Dorsolateral prefrontal cortex (tissue), 120 donors: ENCODE measurements at regions of chr3 and their contacts with region 1.

Region 1: GRCh38 chr3:138118612-138119422 is 3.4 kb upstream of the DZIP1L start:
- DNase-seq: peak; percentile 51 to 80 (median 74)
- H3K4me3 ChIP-seq: no peak overlapping the region
- H3K27ac ChIP-seq: no peak overlapping the region
- H3K27me3 ChIP-seq: no peaks in the 10 kb centered on the region
- CTCF ChIP-seq: peak in 55 of 56 donors; percentile 44 to 88 (median 75)

Region 2: GRCh38 chr3:138068579-138069174 is 50.1 kb before region 1 on chr3:
- intact Hi-C with region 1: loop called (anchors 2 to 5 kb)
- DNase-seq: peak; percentile 67 to 84 (median 76)
- H3K4me3 ChIP-seq: no peak overlapping the region
- H3K27ac ChIP-seq: no peak overlapping the region
- H3K27me3 ChIP-seq: no peaks in the 10 kb centered on the region
- CTCF ChIP-seq: peak; percentile 66 to 99 (median 95)

Region 3: GRCh38 chr3:138172625-138173024 is 53.8 kb after region 1 on chr3:
- intact Hi-C with region 1: no loop called
- DNase-seq: no peak
- H3K4me3 ChIP-seq: peak overlapping the region in 2 of 59 donors; percentile 5 to 85
- H3K27ac ChIP-seq: no peak overlapping the region
- H3K27me3 ChIP-seq: no peaks in the 10 kb centered on the region
- CTCF ChIP-seq: no peak

Region 4: GRCh38 chr3:138186803-138187295 is 68.0 kb after region 1 on chr3:
- intact Hi-C with region 1: loop called in 1 of 2 experiments (anchors 10 kb)
- DNase-seq: peak; percentile 83 to 92 (median 88)
- H3K4me3 ChIP-seq: peak overlapping the region; percentile 61 to 99 (median 91)
- H3K27ac ChIP-seq: peak overlapping the region in 58 of 59 donors; percentile 83 to 99 (median 94)
- H3K27me3 ChIP-seq: no peaks in the 10 kb centered on the region
- CTCF ChIP-seq: peak in 4 of 56 donors; percentile 14 to 57 (median 37)

Region 5: GRCh38 chr3:138197058-138197457 is 78.2 kb after region 1 on chr3:
- intact Hi-C with region 1: no loop called
- DNase-seq: peak in 2 of 10 donors; percentile 7 to 53
- H3K4me3 ChIP-seq: no peak overlapping the region
- H3K27ac ChIP-seq: peak overlapping the region in 18 of 59 donors; percentile 1 to 90 (median 57)
- H3K27me3 ChIP-seq: no peaks in the 10 kb centered on the region
- CTCF ChIP-seq: no peak

Region 6: GRCh38 chr3:138686771-138687221 is 568.0 kb after region 1 on chr3:
- intact Hi-C with region 1: no loop called
- DNase-seq: no peak
- H3K4me3 ChIP-seq: no peak overlapping the region
- H3K27ac ChIP-seq: no peak overlapping the region
- H3K27me3 ChIP-seq: no peaks in the 10 kb centered on the region
- CTCF ChIP-seq: no peak